ENCODE measurements at regions of chr5 and their contacts with region 1.

Region 1: GRCh38 chr5:79560771-79561524 is 47.0 kb upstream of the HOMER1 start:
- DNase-seq: no peak

Region 2: DNA sequence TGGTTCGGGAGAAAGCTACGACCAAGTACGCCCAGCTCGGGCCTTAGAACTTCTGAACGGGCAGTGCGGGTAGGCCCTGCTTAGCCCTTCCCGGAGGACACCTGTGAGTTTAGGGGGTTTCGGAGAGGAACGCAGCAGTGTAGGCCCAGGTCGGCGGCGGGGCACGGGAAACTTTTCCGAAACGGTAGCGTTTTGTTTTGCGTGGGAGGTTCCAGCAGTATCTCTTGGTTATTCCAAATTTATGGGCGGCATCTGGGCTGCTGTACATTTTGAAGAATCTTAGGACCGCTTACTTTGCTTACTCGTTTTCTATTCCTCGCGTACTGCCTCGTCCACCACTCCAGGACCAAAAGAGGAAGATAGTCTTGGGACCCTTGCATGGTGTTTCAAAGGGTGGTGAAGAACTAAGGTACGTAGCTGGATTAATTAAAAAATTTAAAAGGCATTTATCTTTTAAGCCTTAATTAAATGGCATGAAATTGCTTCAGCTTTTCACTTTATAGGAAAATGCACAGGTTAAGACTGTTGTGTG is 51.8 kb after region 1 on chr5:
- intact Hi-C with region 1: loop called (anchors 5 kb)
- DNase-seq: no peak

Measured in cardiac septum (tissue), 1 donor.